GM12878 (cell line): ENCODE measurements at regions of chr1 and their contacts with region 1.

Region 1: DNA sequence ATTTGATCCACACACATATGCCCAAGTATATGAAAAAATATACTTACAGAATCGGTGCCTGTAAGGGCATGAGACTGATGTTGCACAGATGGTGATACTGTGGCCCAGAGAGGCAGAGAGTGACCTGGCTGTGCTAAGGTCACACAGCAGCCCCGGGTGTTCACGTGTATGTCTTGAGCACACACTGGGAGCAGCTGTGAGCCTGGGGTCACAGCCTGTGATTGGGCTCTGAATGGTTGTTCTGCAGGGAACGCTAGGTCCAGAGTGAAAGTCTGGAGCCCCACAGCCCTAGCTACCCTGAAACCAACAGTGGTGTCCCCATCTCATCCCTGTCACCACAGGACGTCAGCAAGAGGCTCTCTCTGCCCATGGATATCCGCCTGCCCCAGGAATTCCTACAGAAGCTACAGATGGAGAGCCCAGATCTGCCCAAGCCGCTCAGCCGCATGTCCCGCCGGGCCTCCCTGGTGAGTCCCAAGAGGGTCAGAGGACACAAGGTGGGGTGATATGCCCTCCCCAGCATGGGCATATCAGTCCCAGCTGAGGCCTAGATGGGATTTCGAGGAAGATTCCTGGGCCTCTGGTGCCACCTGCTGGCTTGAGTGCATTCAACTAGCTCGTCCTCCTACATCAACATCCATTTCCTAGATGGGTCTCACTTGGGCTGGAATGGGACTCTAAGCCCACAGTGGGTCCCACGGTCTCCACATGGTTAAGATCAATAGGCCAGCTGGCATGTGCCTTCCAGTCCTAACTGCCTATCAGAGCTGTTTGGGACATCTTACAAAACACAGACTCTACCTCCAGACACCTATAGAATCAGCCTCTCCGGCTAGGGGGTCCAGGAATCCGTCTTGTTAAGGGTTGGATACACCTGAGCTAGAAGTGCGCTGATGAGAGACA is 19.7 kb downstream of the CDK18 start:
- DNase-seq: no peak
- ATAC-seq: peak; percentile 80
- H3K4me3 ChIP-seq: no peak overlapping the region
- H3K27ac ChIP-seq: no peak overlapping the region
- H3K4me1 ChIP-seq: no peaks in the 10 kb centered on the region
- H3K27me3 ChIP-seq: peaks cover 0 to 1% of the 10 kb centered on the region in 2 experiments; a peak in 3 of 4 replicates
- CTCF ChIP-seq: peak; percentile 75 to 85 (median 77)
- EP300 ChIP-seq: no peak
- POLR2A ChIP-seq: no peak
- RAD21 ChIP-seq: peak; percentile 79

Region 2: DNA sequence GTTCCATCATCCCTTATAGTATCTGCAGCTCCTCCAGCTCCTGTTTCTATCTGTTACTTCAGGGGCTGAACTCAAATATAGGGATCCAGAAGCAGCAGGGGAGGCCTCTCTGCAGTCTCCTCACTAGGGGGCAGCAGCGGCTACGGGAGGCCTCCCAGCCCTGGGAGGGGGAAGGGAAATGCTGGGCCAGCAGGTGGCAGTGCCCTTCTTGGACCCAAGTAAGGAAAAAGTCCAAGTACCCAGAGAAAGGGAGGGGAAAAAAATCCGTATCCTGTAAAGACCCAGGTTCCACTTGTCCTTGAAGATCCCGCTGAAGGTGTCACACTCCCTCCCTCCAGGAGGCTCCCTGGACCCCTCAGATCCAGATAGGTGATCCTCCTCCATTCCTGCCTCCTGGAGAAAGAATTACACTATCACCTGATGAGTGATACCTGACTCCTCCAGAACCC is 188.5 kb before region 1 on chr1:
- CTCF ChIA-PET with region 1: interaction called, 45 read pairs
- POLR2A ChIA-PET with region 1: no interaction called
- RAD21 ChIA-PET with region 1: interaction called, 23 read pairs
- SMC1A ChIA-PET with region 1: interaction called, 22 read pairs
- in situ Hi-C with region 1: no loop called
- intact Hi-C with region 1: loop called (anchors 1 kb)
- DNase-seq: no peak
- ATAC-seq: peak; percentile 87
- H3K4me3 ChIP-seq: no peak overlapping the region
- H3K27ac ChIP-seq: no peak overlapping the region
- H3K4me1 ChIP-seq: peaks cover 6% of the 10 kb centered on the region; the same call in 1 of the 2 replicates
- H3K27me3 ChIP-seq: peaks cover 7 to 18% of the 10 kb centered on the region in 2 experiments
- CTCF ChIP-seq: peak; percentile 98 to 99 (median 99); a peak in 5 of 6 replicates
- EP300 ChIP-seq: no peak
- POLR2A ChIP-seq: no peak
- RAD21 ChIP-seq: peak; percentile 69

Region 3: GRCh38 chr1:205416322-205416721 is 107.8 kb before region 1 on chr1:
- CTCF ChIA-PET with region 1: interaction called, 14 read pairs
- POLR2A ChIA-PET with region 1: no interaction called
- RAD21 ChIA-PET with region 1: interaction called, 6 read pairs
- SMC1A ChIA-PET with region 1: interaction called, 7 read pairs
- in situ Hi-C with region 1: no loop called
- intact Hi-C with region 1: no loop called
- DNase-seq: no peak
- ATAC-seq: no peak
- H3K4me3 ChIP-seq: no peak overlapping the region
- H3K27ac ChIP-seq: no peak overlapping the region
- H3K4me1 ChIP-seq: no peaks in the 10 kb centered on the region
- H3K27me3 ChIP-seq: peaks cover 0 to 6% of the 10 kb centered on the region in 2 experiments; a peak in 3 of 4 replicates
- CTCF ChIP-seq: no peak
- EP300 ChIP-seq: no peak
- POLR2A ChIP-seq: no peak
- RAD21 ChIP-seq: no peak

Region 4: DNA sequence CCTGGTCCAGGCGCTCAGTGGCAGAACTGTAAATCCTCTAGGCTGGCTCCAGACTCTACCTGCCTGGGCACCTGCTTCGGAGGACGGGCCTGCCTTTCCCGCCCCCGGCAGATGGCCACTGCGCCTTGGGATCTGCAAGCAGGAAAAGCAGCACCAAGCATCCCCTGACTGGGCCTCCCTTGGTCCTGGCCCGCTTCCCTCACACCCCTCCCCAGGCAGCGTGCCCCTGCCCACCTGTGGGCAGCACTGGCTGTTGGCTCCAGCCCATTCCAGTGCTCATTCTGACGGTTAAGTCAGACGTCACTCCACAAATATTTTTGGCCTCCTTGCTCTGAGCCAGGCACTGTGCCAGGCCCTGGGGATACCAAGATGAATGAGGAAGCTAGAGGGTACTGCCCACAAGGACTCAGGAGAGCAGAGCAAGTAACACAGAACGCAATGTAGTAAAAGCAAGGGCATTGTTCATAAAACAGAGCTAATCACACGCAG is 46.3 kb before region 1 on chr1:
- CTCF ChIA-PET with region 1: interaction called, 891 read pairs
- POLR2A ChIA-PET with region 1: no interaction called
- RAD21 ChIA-PET with region 1: interaction called, 8 read pairs
- SMC1A ChIA-PET with region 1: interaction called, 319 read pairs
- in situ Hi-C with region 1: no loop called
- intact Hi-C with region 1: no loop called
- DNase-seq: no peak
- ATAC-seq: no peak
- H3K4me3 ChIP-seq: no peak overlapping the region
- H3K27ac ChIP-seq: no peak overlapping the region
- H3K4me1 ChIP-seq: peaks cover 25% of the 10 kb centered on the region
- H3K27me3 ChIP-seq: peaks cover 0 to 2% of the 10 kb centered on the region in 2 experiments; a peak in 1 of 4 replicates
- CTCF ChIP-seq: no peak
- EP300 ChIP-seq: no peak
- POLR2A ChIP-seq: no peak
- RAD21 ChIP-seq: no peak

Region 5: DNA sequence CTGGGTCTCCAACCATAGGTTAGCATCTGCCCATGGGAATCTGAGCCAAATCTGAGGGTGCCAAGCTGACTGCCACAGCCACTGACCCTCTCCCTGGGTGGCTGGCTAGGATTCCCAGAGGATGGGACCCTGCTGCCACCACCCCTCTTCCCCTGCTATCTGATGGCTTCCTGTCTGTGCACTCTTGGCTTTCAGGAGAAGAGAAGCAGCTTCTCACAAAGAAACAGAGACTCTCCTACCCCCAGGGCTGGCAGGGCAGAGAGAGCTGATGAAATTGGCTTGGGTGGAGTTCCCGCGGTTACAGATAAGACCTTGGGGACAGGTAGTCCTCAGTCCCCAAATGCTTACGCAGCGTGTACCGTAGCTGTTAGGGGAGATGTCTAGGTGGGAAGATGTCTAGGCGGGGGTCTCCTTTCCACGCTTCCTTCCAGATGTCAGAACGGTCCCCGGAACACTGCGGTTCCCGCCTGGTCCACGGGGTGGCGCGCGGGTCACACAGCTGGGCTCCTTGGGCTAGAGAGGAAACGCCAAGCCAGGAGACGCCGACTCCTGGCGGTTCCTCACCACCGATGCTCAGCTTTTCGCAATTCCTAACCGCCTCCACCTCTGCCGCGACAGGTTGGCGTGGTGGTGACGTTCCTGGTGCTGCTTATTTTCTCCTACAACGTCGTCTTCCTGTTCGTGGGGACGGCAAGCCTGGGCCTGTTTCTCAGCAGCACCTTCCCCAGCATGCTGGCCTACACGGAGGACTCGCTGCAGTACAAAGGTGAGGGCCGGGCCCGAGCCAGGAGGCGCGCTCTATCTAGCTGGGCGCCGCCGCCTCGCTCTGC is 67.6 kb after region 1 on chr1:
- CTCF ChIA-PET with region 1: interaction called, 50 read pairs
- POLR2A ChIA-PET with region 1: interaction called, 3 read pairs
- RAD21 ChIA-PET with region 1: interaction called, 13 read pairs
- SMC1A ChIA-PET with region 1: interaction called, 23 read pairs
- in situ Hi-C with region 1: no loop called
- intact Hi-C with region 1: loop called (anchors 5 kb)
- DNase-seq: peak; percentile 59
- ATAC-seq: peak; percentile 79
- H3K4me3 ChIP-seq: peak overlapping the region; percentile 66; the same call in 1 of the 2 replicates
- H3K27ac ChIP-seq: peak overlapping the region; percentile 71
- H3K4me1 ChIP-seq: peaks cover 36% of the 10 kb centered on the region
- H3K27me3 ChIP-seq: no peaks in the 10 kb centered on the region
- CTCF ChIP-seq: peak; percentile 98 to 99 (median 99); a peak in 5 of 6 replicates
- EP300 ChIP-seq: no peak
- POLR2A ChIP-seq: peak; percentile 69
- RAD21 ChIP-seq: peak; percentile 96

Region 6: GRCh38 chr1:205870236-205870635 is 346.1 kb after region 1 on chr1:
- CTCF ChIA-PET with region 1: no interaction called
- POLR2A ChIA-PET with region 1: no interaction called
- RAD21 ChIA-PET with region 1: no interaction called
- SMC1A ChIA-PET with region 1: no interaction called
- in situ Hi-C with region 1: no loop called
- intact Hi-C with region 1: no loop called
- DNase-seq: no peak
- ATAC-seq: no peak
- H3K4me3 ChIP-seq: no peak overlapping the region
- H3K27ac ChIP-seq: no peak overlapping the region
- H3K4me1 ChIP-seq: no peaks in the 10 kb centered on the region
- H3K27me3 ChIP-seq: no peaks in the 10 kb centered on the region
- CTCF ChIP-seq: no peak
- EP300 ChIP-seq: no peak
- POLR2A ChIP-seq: no peak
- RAD21 ChIP-seq: no peak